Head of caudate nucleus (tissue), 42 donors: ENCODE measurements at regions of chr16 and their contacts with region 1.

Region 1: GRCh38 chr16:30805370-30806169 is 18.6 kb upstream of the ZNF629 start:
- DNase-seq: peak; percentile 70 to 96 (median 90)

Region 2: GRCh38 chr16:30786936-30787612 is 18.5 kb before region 1 on chr16 and contains the start of gene ZNF629:
- intact Hi-C with region 1: loop called (anchors 2 kb)
- DNase-seq: peak; percentile 65 to 94 (median 84)